ENCODE measurements at regions of chr11 and their contacts with region 1.

Region 1: GRCh38 chr11:61733120-61733978 is 19.1 kb upstream of the MYRF start:
- DNase-seq: peak; percentile 65 to 92 (median 83)
- ATAC-seq: peak; percentile 90 to 99 (median 96)
- H3K4me3 ChIP-seq: no peak overlapping the region
- H3K4me3 Mint-ChIP-seq: no peak overlapping the region
- H3K27ac ChIP-seq: no peak overlapping the region
- H3K27ac Mint-ChIP-seq: no peak overlapping the region
- H3K4me1 ChIP-seq: peaks cover 0 to 4% of the 10 kb centered on the region in 2 experiments
- H3K4me1 Mint-ChIP-seq: peaks cover 2 to 7% (median 4%) of the 10 kb centered on the region in 3 donors
- H3K27me3 ChIP-seq: peaks cover 0 to 12% of the 10 kb centered on the region in 2 experiments
- H3K27me3 Mint-ChIP-seq: no peaks in the 10 kb centered on the region

Region 2: DNA sequence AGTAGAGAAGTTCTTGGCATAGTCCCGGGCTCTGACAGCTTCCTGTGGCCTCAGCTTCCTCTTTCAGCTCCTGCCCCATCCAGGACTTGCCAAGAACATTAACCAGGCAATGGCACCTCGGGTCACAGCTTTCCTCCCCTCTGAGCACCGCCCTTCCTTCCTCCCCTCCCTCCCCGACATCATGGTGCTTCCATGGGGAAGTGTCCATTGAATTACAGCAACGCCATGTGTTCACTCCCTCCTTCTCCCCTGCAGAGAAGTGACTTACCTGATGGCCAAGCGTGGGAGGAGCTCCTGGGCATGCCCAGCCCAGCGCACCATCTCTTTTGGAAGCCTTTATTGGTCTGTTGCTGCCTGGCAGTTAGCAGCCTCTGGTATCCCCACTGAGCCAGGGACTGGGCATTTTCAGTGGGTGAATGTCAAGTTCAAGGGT is 78.9 kb before region 1 on chr11:
- CTCF ChIA-PET with region 1: no interaction called
- POLR2A ChIA-PET with region 1: no interaction called
- DNase-seq: peak in 1 of 35 experiments; percentile 15
- ATAC-seq: no peak
- H3K4me3 ChIP-seq: no peak overlapping the region
- H3K4me3 Mint-ChIP-seq: no peak overlapping the region
- H3K27ac ChIP-seq: no peak overlapping the region
- H3K27ac Mint-ChIP-seq: no peak overlapping the region
- H3K4me1 ChIP-seq: no peaks in the 10 kb centered on the region
- H3K4me1 Mint-ChIP-seq: no peaks in the 10 kb centered on the region
- H3K27me3 ChIP-seq: peaks cover 0 to 39% of the 10 kb centered on the region in 2 experiments
- H3K27me3 Mint-ChIP-seq: peaks cover 24 to 32% of the 10 kb centered on the region in 2 donors

Region 3: GRCh38 chr11:61679893-61680621 is 53.3 kb before region 1 on chr11 and contains the start of gene DAGLA:
- CTCF ChIA-PET with region 1: interaction called, 4 to 21 read pairs
- POLR2A ChIA-PET with region 1: no interaction called
- DNase-seq: peak; percentile 28 to 86 (median 69)
- ATAC-seq: peak; percentile 73 to 86 (median 79)
- H3K4me3 ChIP-seq: peak within 1 kb of the TSS in 1 of 2 donors; percentile 35
- H3K4me3 Mint-ChIP-seq: peak within 1 kb of the TSS; percentile 65 to 72 (median 67)
- H3K27ac ChIP-seq: no peak within 1 kb of the TSS
- H3K27ac Mint-ChIP-seq: no peak within 1 kb of the TSS
- H3K4me1 ChIP-seq: peaks cover 10 to 29% of the 10 kb centered on the region in 2 experiments
- H3K4me1 Mint-ChIP-seq: peaks cover 5 to 11% (median 7%) of the 10 kb centered on the region in 3 donors
- H3K27me3 ChIP-seq: peaks cover 0 to 60% of the 10 kb centered on the region in 2 experiments
- H3K27me3 Mint-ChIP-seq: peaks cover 3 to 32% of the 10 kb centered on the region in 2 donors
- total RNA-seq, gene DAGLA: 0.15 to 1.6 (median 0.23) TPM

Region 4: GRCh38 chr11:61718621-61719302 is 14.6 kb before region 1 on chr11:
- CTCF ChIA-PET with region 1: no interaction called
- POLR2A ChIA-PET with region 1: no interaction called
- DNase-seq: no peak
- ATAC-seq: no peak
- H3K4me3 ChIP-seq: no peak overlapping the region
- H3K4me3 Mint-ChIP-seq: no peak overlapping the region
- H3K27ac ChIP-seq: no peak overlapping the region
- H3K27ac Mint-ChIP-seq: no peak overlapping the region
- H3K4me1 ChIP-seq: no peaks in the 10 kb centered on the region
- H3K4me1 Mint-ChIP-seq: no peaks in the 10 kb centered on the region
- H3K27me3 ChIP-seq: peaks cover 0 to 17% of the 10 kb centered on the region in 2 experiments
- H3K27me3 Mint-ChIP-seq: peaks cover 0 to 6% of the 10 kb centered on the region in 2 donors

Measured in T-cell (primary cell).